B cell (primary cell): ENCODE measurements at regions of chr1 and their contacts with region 1.

Region 1: GRCh38 chr1:27234049-27234882 is at the start of gene WDTC1:
- DNase-seq: peak; percentile 99
- ATAC-seq: peak; percentile 90
- H3K4me3 ChIP-seq: peak within 1 kb of the TSS; percentile 58 to 77 (median 75)
- H3K4me3 Mint-ChIP-seq: peak within 1 kb of the TSS; percentile 97
- H3K27ac ChIP-seq: peak within 1 kb of the TSS; percentile 38 to 83
- H3K27ac Mint-ChIP-seq: peak within 1 kb of the TSS; percentile 98
- H3K4me1 ChIP-seq: peaks cover 18 to 26% of the 10 kb centered on the region in 2 donors
- H3K4me1 Mint-ChIP-seq: peaks cover 33% of the 10 kb centered on the region
- H3K27me3 ChIP-seq: no peaks in the 10 kb centered on the region
- H3K27me3 Mint-ChIP-seq: no peaks in the 10 kb centered on the region
- CTCF ChIP-seq: no peak
- total RNA-seq, gene WDTC1: 69.1 and 70.9 TPM in 2 replicates

Region 2: GRCh38 chr1:27097484-27097917 is 136.8 kb before region 1 on chr1:
- CTCF ChIA-PET with region 1: interaction called, 4 read pairs
- POLR2A ChIA-PET with region 1: no interaction called
- intact Hi-C with region 1: loop called (anchors 1 kb)
- DNase-seq: peak; percentile 81
- ATAC-seq: peak; percentile 48
- H3K4me3 ChIP-seq: no peak overlapping the region
- H3K4me3 Mint-ChIP-seq: no peak overlapping the region
- H3K27ac ChIP-seq: no peak overlapping the region
- H3K27ac Mint-ChIP-seq: peak overlapping the region; percentile 53
- H3K4me1 ChIP-seq: peaks cover 12 to 23% of the 10 kb centered on the region in 2 donors
- H3K4me1 Mint-ChIP-seq: peaks cover 20% of the 10 kb centered on the region
- H3K27me3 ChIP-seq: no peaks in the 10 kb centered on the region
- H3K27me3 Mint-ChIP-seq: no peaks in the 10 kb centered on the region
- CTCF ChIP-seq: peak; percentile 95

Region 3: GRCh38 chr1:27203946-27204345 is 30.3 kb before region 1 on chr1:
- CTCF ChIA-PET with region 1: no interaction called
- POLR2A ChIA-PET with region 1: no interaction called
- intact Hi-C with region 1: loop called (anchors 2 kb)
- DNase-seq: no peak
- ATAC-seq: no peak
- H3K4me3 ChIP-seq: no peak overlapping the region
- H3K4me3 Mint-ChIP-seq: no peak overlapping the region
- H3K27ac ChIP-seq: no peak overlapping the region
- H3K27ac Mint-ChIP-seq: no peak overlapping the region
- H3K4me1 ChIP-seq: no peaks in the 10 kb centered on the region
- H3K4me1 Mint-ChIP-seq: peaks cover 5% of the 10 kb centered on the region
- H3K27me3 ChIP-seq: no peaks in the 10 kb centered on the region
- H3K27me3 Mint-ChIP-seq: no peaks in the 10 kb centered on the region
- CTCF ChIP-seq: no peak

Region 4: DNA sequence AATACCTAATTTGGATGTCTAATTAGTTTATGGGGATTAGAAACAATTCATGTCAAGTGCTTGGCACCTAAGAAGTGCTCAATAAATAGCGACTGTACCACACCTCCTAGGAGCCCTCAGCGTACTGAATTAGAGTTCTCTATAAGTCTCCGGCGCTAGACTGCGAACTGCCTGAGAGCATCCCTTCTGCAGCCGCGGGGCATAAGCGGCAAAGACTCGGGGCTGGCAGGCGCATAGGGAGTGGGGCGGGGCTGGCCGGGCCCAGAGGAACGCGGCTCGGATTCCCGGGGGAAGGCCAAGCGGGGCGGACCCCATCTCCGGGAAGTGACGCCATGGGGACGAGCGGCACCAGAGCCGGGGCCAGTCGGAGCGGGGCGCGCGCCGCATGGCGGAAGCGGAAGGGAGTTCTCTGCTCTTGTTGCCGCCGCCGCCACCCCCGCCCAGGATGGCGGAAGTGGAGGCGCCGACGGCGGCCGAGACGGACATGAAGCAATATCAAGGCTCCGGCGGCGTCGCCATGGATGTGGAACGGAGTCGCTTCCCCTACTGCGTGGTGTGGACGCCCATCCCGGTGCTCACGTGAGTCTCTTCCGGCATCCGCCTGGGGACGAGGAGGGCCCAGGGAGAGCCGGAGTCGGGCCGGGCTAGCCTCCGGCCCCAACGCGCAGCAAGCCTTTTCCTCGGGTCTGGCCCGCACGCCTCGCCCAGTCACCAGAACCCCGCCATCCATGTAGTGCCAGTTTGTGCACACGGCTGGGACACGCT is 87.7 kb after region 1 on chr1 and contains the start of gene TMEM222:
- CTCF ChIA-PET with region 1: no interaction called
- POLR2A ChIA-PET with region 1: interaction called, 4 read pairs
- intact Hi-C with region 1: loop called (anchors 1 kb)
- DNase-seq: peak; percentile 98
- ATAC-seq: peak; percentile 96
- H3K4me3 ChIP-seq: peak within 1 kb of the TSS; percentile 80 to 100 (median 98)
- H3K4me3 Mint-ChIP-seq: peak within 1 kb of the TSS; percentile 98
- H3K27ac ChIP-seq: peak within 1 kb of the TSS; percentile 94
- H3K27ac Mint-ChIP-seq: peak within 1 kb of the TSS; percentile 97
- H3K4me1 ChIP-seq: peaks cover 17 to 25% of the 10 kb centered on the region in 2 donors
- H3K4me1 Mint-ChIP-seq: peaks cover 51% of the 10 kb centered on the region
- H3K27me3 ChIP-seq: no peaks in the 10 kb centered on the region
- H3K27me3 Mint-ChIP-seq: peaks cover 12% of the 10 kb centered on the region
- CTCF ChIP-seq: no peak
- total RNA-seq, gene TMEM222: 44.2 and 48.7 TPM in 2 replicates

Region 5: DNA sequence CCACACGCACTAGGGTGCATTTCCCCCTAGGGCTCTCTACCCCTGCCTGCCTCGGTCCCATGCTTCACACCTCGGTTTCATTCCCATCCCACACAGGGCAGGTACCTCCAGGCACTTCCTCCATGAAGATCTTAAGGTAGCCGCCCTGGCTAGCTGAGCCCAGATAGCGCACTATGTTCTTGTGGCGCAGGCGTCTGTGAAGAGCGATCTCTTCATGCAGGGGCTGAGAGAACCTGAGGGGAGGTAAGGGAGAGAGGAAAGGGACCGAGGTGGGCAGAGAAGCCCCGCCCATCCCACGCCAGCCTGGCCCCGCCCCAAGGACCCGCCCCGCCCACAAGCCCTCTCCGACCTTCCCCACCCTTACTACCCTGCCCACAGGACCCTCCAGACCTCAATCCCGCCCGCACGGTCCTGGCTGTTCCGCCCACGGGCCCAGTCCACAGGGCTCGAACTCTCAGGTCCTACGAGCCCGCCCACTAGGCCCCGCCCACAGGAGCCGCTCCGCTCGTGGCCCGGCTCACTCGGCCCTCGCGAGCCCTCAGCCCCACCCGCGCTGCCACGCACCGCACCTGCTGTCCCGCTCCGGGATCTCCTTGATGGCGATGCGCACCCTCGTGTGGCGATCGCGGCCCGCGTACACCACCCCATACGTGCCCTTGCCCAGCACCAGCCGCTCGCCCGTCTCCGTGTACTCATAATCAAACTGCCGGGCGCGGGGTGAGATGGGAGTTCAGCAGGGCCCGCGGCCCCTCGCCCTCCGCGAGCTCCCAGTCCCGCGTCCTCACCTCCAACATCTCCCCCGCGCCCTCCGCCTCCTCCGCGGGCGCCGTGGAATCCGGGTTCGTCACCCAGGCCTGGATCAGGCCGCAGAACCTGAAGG is 126.1 kb after region 1 on chr1:
- CTCF ChIA-PET with region 1: no interaction called
- POLR2A ChIA-PET with region 1: no interaction called
- intact Hi-C with region 1: no loop called
- DNase-seq: peak; percentile 78
- ATAC-seq: peak; percentile 42
- H3K4me3 ChIP-seq: peak overlapping the region; percentile 48 to 63 (median 57)
- H3K4me3 Mint-ChIP-seq: peak overlapping the region; percentile 92
- H3K27ac ChIP-seq: no peak overlapping the region
- H3K27ac Mint-ChIP-seq: peak overlapping the region; percentile 70
- H3K4me1 ChIP-seq: peaks cover 44 to 61% of the 10 kb centered on the region in 2 donors
- H3K4me1 Mint-ChIP-seq: peaks cover 60% of the 10 kb centered on the region
- H3K27me3 ChIP-seq: no peaks in the 10 kb centered on the region
- H3K27me3 Mint-ChIP-seq: no peaks in the 10 kb centered on the region
- CTCF ChIP-seq: no peak

Region 6: DNA sequence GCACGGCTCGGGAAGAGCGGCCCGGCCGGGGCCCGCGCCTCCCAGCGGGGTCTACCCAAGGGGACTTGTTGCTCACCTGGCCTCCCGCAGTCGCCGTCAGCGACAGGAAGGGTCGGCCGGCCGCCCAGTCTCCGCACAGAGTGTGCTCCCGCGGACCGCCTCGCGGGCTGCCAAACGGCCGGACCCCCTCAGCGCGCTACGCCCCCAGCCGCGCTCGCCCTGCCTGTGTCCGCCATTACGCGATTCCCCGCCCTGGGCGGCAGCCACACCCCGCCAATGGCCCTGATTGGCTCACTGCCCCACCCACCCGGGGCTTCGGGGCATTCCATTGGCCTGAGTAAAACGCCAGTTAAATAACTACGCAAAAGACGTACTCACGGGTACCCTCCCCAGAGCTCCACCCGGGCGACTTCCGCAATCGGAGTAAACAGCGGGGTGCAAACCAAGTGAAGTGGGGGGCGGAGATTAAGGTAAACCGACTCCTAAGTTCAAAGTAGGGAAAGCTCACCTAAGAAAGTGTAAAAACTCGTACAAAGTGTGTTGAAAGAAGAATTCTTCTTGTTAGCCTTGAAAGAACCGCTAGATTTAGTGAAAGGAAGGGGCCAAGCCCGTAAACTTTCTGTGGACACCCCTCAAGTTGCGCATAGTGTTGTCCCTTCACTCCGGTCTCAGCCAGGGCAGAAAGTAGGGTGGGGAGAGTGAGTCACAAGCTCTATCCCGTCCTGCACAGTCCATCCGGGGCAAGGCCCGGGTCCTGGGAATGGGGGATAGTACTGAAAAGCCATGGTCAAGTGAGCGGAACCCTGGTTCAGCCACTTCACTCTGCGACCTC is 255.9 kb after region 1 on chr1 and contains the start of gene WASF2:
- CTCF ChIA-PET with region 1: no interaction called
- POLR2A ChIA-PET with region 1: no interaction called
- intact Hi-C with region 1: loop called (anchors 1 kb)
- DNase-seq: peak; percentile 98
- ATAC-seq: peak; percentile 90
- H3K4me3 ChIP-seq: peak within 1 kb of the TSS; percentile 78 to 100 (median 99)
- H3K4me3 Mint-ChIP-seq: peak within 1 kb of the TSS; percentile 99
- H3K27ac ChIP-seq: peak within 1 kb of the TSS; percentile 89 to 95
- H3K27ac Mint-ChIP-seq: peak within 1 kb of the TSS; percentile 99
- H3K4me1 ChIP-seq: peaks cover 44 to 58% of the 10 kb centered on the region in 2 donors
- H3K4me1 Mint-ChIP-seq: peaks cover 57% of the 10 kb centered on the region
- H3K27me3 ChIP-seq: no peaks in the 10 kb centered on the region
- H3K27me3 Mint-ChIP-seq: no peaks in the 10 kb centered on the region
- CTCF ChIP-seq: no peak
- total RNA-seq, gene WASF2: 166 and 169 TPM in 2 replicates